H1 (cell line): ENCODE measurements at regions of chr19 and their contacts with region 1.

Region 1: DNA sequence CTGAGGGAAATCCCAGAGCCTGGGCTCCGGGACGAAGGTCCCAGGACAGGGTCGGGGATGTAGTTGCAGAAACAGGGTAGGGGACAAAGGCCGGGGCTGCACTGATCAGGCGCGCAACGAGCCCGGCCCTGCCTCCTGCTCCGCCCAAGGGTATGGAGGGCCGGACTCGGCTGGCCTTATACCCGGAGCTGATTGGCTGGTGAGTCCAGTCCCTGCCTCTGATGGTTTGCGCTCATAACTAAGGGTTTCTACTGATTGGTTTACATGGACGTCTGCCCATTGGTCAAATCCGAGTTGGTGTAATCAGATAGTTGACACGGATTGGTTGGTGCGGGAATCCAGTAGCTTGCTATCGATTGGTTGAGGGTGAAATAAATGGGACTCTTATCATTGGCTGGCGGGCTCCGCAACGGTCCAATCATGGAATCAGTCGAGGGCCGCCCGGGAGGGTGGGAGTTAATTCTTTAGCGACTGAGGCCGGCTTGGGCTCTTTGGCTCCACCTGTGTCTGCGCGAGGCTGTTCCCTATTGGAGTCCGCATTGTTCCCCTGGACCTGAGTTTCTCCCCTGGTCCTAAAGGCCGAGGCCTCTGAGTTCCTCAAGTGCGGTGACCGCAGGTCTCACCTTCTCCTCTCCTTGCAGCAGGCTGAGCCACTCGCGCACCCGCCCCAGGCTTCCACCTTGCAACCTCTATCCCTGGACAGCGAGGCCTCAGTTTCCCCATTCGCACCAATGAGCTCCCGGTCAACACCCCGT is 570 bp upstream of the MPND start:
- DNase-seq: peak; percentile 94 to 97
- H3K4me3 ChIP-seq: peak overlapping the region; percentile 66 to 92 (median 78)
- H3K27ac ChIP-seq: peak overlapping the region; percentile 96
- H3K4me1 ChIP-seq: peaks cover 0 to 16% (median 8%) of the 10 kb centered on the region in 4 experiments; a peak in 6 of 7 replicates
- H3K27me3 ChIP-seq: no peaks in the 10 kb centered on the region
- CTCF ChIP-seq: peak; percentile 23 to 50 (median 35); a peak in 3 of 4 replicates
- EP300 ChIP-seq: no peak
- POLR2A ChIP-seq: peak; percentile 93 to 99
- RAD21 ChIP-seq: peak; percentile 17 to 23; a peak in 2 of 4 replicates

Region 2: DNA sequence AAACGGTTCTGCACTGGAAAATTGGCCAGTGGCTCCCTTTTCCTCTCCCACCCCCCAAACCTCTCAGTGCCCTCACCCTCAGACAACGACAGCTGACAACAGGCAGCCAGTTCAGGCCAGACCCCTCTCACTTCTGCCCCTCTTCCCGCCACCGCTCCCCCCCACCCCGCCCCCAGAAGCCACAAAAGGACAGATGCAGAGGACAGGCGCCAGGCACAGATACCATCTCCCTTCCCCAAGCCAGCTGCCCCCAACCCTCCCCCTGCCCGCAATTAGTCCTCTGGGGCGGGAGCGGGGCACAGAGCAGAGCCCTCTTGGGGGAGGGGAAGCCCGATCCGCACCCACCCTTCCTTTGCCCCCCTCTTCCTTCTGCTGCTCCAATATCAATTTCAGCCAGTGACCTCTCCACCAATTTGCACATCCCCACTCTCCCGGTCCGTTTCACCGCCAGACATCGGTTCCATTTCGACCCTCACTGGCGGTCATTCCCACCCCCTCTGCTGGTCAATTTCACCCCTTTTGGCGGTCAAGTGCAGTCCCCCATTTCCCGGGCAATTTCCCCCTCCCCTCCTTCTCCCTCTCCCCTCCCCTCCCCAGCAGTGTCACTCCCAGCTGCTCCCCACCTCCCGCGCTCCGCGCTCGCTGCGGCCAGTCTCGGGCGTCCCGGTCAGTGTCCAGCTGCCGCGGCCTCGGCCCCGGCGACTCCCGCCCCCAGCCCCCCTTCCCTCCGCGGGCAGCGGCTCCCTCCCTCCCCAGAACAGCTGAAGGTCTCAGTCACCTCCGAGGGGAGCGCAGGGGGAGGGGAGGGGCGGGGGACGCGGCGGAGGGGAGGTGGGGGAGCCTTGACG is 64.1 kb before region 1 on chr19 and contains the start of gene SHD:
- CTCF ChIA-PET with region 1: interaction called, 311 read pairs
- POLR2A ChIA-PET with region 1: interaction called, 19 read pairs
- DNase-seq: peak in 1 of 2 experiments; percentile 71
- H3K4me3 ChIP-seq: peak within 1 kb of the TSS; percentile 49 to 88 (median 57)
- H3K27ac ChIP-seq: no peak within 1 kb of the TSS
- H3K4me1 ChIP-seq: no peaks in the 10 kb centered on the region; a peak in 4 of 7 replicates
- H3K27me3 ChIP-seq: peaks cover 9 to 35% (median 29%) of the 10 kb centered on the region in 4 experiments
- CTCF ChIP-seq: peak in 1 of 3 experiments; percentile 14; a peak in 1 of 4 replicates
- EP300 ChIP-seq: no peak
- POLR2A ChIP-seq: no peak
- RAD21 ChIP-seq: no peak
- total RNA-seq, gene SHD: 5.8 and 7.3 TPM in 2 replicates

Region 3: GRCh38 chr19:4304530-4305252 is 38.1 kb before region 1 on chr19 and contains the start of gene FSD1:
- CTCF ChIA-PET with region 1: interaction called, 4 read pairs
- POLR2A ChIA-PET with region 1: interaction called, 12 read pairs
- DNase-seq: peak; percentile 39 to 95
- H3K4me3 ChIP-seq: peak within 1 kb of the TSS; percentile 14 to 58 (median 42); a peak in 6 of 8 replicates
- H3K27ac ChIP-seq: no peak within 1 kb of the TSS
- H3K4me1 ChIP-seq: peaks cover 0 to 8% (median 0%) of the 10 kb centered on the region in 4 experiments; a peak in 3 of 7 replicates
- H3K27me3 ChIP-seq: no peaks in the 10 kb centered on the region
- CTCF ChIP-seq: no peak
- EP300 ChIP-seq: no peak
- POLR2A ChIP-seq: no peak
- RAD21 ChIP-seq: no peak
- total RNA-seq, gene FSD1: 54.8 and 58.8 TPM in 2 replicates

Region 4: DNA sequence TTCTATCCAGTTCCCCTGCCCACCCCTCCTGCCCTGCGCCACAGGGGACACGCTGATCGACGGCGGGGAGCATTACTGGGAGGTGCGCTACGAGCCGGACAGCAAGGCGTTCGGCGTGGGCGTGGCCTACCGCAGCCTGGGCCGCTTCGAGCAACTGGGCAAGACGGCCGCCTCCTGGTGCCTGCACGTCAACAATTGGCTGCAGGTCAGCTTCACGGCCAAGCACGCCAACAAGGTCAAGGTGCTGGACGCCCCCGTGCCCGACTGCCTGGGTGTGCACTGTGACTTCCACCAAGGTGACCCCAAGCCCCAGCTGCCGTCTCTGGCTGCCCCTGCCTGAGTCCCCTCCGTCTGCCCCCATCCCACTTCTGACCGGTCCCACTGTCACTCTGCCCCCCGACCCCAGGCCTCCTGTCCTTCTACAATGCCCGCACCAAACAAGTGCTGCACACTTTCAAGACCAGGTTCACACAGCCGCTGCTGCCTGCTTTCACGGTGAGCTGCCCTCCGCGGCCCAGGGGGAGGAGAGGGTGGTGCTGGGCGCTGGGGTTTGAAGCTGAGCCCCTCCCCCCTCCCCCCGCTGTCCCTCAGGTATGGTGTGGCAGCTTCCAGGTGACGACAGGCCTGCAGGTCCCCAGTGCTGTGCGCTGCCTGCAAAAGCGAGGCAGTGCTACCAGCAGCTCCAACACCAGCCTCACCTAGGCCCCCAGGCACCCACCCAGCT is 19.7 kb before region 1 on chr19:
- CTCF ChIA-PET with region 1: interaction called, 7 read pairs
- POLR2A ChIA-PET with region 1: interaction called, 25 read pairs
- DNase-seq: no peak
- H3K4me3 ChIP-seq: no peak overlapping the region
- H3K27ac ChIP-seq: no peak overlapping the region
- H3K4me1 ChIP-seq: peaks cover 0 to 4% (median 2%) of the 10 kb centered on the region in 4 experiments; a peak in 4 of 7 replicates
- H3K27me3 ChIP-seq: no peaks in the 10 kb centered on the region
- CTCF ChIP-seq: no peak
- EP300 ChIP-seq: no peak
- POLR2A ChIP-seq: no peak
- RAD21 ChIP-seq: no peak

Region 5: DNA sequence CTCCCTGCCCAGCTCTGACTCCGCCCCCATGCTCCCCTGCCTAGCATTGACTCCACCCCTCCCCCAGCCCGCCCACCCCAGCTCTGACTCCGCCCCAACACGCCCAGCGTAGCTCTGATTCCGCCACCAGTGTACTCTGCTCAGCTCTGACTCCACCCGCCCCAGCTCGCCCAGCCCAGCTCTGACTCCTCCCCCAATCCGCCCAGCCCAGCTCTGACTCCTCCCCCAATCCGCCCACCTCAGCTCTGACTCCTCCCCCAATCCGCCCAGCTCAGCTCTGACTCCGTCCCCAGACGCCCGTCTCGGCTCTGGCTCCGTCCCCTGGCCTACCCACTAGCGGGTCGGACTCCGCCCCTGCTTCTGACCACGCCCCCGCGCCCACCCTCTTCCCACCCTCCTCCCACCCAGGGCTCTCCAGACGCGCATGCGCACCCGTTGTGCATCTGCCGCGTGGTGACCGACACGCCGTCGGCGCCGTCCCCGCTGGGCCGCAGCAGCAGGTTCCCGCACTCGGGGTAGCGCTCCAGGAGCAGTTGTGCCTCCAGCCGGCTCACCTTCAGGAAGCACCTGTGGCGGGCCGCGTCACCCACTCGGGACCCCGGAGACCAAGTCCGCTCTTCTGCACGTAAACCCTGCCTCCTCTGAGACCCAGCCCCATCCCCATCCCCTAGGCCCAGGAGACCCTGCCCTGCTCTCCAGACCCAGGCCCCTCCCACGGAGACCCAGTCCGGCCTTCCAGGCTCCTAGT is 14.4 kb before region 1 on chr19:
- CTCF ChIA-PET with region 1: interaction called, 4 read pairs
- POLR2A ChIA-PET with region 1: interaction called, 46 read pairs
- DNase-seq: peak; percentile 93 to 97
- H3K4me3 ChIP-seq: peak overlapping the region; percentile 70 to 80 (median 74)
- H3K27ac ChIP-seq: peak overlapping the region; percentile 60; the same call in 1 of the 2 replicates
- H3K4me1 ChIP-seq: peaks cover 0 to 6% (median 3%) of the 10 kb centered on the region in 4 experiments; a peak in 5 of 7 replicates
- H3K27me3 ChIP-seq: no peaks in the 10 kb centered on the region; a peak in 1 of 7 replicates
- CTCF ChIP-seq: no peak
- EP300 ChIP-seq: no peak
- POLR2A ChIP-seq: peak in 1 of 2 experiments; percentile 73; a peak in 1 of 3 replicates
- RAD21 ChIP-seq: no peak

Region 6: GRCh38 chr19:4362861-4363510 is 20.2 kb after region 1 on chr19:
- CTCF ChIA-PET with region 1: interaction called, 4 read pairs
- POLR2A ChIA-PET with region 1: interaction called, 72 read pairs
- DNase-seq: peak in 1 of 2 experiments; percentile 76
- H3K4me3 ChIP-seq: no peak overlapping the region
- H3K27ac ChIP-seq: no peak overlapping the region
- H3K4me1 ChIP-seq: peaks cover 0 to 13% (median 2%) of the 10 kb centered on the region in 4 experiments; a peak in 3 of 7 replicates
- H3K27me3 ChIP-seq: no peaks in the 10 kb centered on the region
- CTCF ChIP-seq: peak; percentile 60 to 77 (median 67)
- EP300 ChIP-seq: no peak
- POLR2A ChIP-seq: 0 out of 3 replicates have a peak, but pooled peaks of 1 of the 2 experiments have one; percentile 45
- RAD21 ChIP-seq: peak; percentile 51 to 58

Region 7: GRCh38 chr19:4425537-4425936 is 82.7 kb after region 1 on chr19:
- CTCF ChIA-PET with region 1: no interaction called
- POLR2A ChIA-PET with region 1: no interaction called
- DNase-seq: no peak
- H3K4me3 ChIP-seq: no peak overlapping the region
- H3K27ac ChIP-seq: no peak overlapping the region
- H3K4me1 ChIP-seq: no peaks in the 10 kb centered on the region
- H3K27me3 ChIP-seq: no peaks in the 10 kb centered on the region
- CTCF ChIP-seq: no peak
- EP300 ChIP-seq: no peak
- POLR2A ChIP-seq: no peak
- RAD21 ChIP-seq: no peak